Aorta (tissue), 5 donors: ENCODE measurements at regions of chr18 and their contacts with region 1.

Region 1: GRCh38 chr18:63619661-63620060 is 24.4 kb downstream of the SERPINB4 start:
- DNase-seq: no peak
- ATAC-seq: no peak
- H3K4me3 ChIP-seq: no peak overlapping the region
- H3K27ac ChIP-seq: no peak overlapping the region
- H3K4me1 ChIP-seq: no peaks in the 10 kb centered on the region
- H3K27me3 ChIP-seq: no peaks in the 10 kb centered on the region

Region 2: GRCh38 chr18:63562284-63562683 is 57.4 kb before region 1 on chr18:
- intact Hi-C with region 1: loop called in 1 of 2 experiments (anchors 10 kb)
- DNase-seq: no peak
- ATAC-seq: no peak
- H3K4me3 ChIP-seq: no peak overlapping the region
- H3K27ac ChIP-seq: no peak overlapping the region
- H3K4me1 ChIP-seq: no peaks in the 10 kb centered on the region
- H3K27me3 ChIP-seq: peaks cover 0 to 1% of the 10 kb centered on the region in 2 donors

Region 3: DNA sequence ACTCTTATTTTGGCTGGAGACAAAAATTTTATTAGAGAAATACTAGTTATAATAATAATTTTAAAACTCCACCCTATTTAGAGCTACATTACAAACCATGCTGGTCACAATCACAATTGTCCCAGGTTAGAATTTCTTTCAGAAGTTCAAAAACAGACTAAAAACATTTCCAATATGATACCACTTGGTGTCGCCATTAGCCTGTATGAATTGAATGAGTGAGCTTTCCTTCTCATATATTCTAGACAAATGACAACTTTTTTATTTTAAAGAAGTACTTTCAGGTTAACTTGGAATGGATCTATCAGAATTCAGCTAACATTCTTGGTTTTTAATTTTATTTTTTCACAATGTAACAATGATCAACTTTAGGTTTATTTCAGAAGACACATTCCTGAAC is 398.2 kb after region 1 on chr18:
- intact Hi-C with region 1: no loop called
- DNase-seq: no peak
- ATAC-seq: no peak
- H3K4me3 ChIP-seq: no peak overlapping the region
- H3K27ac ChIP-seq: no peak overlapping the region
- H3K4me1 ChIP-seq: no peaks in the 10 kb centered on the region
- H3K27me3 ChIP-seq: no peaks in the 10 kb centered on the region